Heart right ventricle (tissue), 16 donors: ENCODE measurements at regions of chrX and their contacts with region 1.

Region 1: DNA sequence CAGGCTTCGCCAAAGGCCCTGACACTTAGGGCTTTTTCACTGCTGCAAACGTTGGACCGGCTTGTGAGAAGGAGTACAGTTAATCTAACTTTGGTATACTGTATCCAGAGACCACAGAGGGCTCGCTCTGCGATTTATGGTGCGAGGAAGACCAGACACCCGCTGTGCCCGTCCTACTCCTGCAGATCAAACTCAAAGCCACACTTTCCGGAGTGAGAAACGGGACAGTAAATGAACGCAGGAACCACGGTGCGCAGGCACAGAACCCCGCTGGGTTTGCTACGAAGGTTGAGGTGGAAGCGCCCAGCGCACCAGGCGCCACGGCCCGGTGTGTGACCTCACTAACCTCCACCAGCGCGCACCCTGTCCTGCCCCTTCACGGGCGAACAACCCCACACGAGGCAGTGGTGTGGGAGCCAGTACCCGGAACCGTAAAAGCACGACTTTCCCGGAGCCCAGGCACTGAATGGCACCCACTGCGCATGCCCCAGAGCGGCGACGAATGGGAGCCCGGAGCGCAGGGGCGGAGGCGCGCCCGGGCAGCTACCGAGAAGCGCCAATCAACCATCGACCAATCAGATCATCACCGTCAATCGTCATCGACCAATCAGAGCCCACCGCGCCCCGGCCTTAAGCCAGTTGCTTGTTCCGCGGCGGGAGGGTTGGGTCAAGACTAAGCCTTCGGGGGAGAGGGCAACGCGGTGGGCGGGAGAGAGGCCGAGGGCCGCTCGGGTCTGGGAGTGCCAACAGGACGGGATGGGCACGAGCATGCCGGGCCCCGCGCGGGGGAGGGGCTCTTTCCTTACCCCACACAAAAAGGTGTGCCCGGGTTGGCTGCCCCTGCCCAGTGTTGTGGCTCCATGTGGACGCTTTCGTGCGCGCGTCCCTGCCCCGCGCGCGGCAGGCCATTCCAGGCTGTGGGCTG is 21.3 kb upstream of the WDR45 start:
- DNase-seq: peak; percentile 90 to 91
- ATAC-seq: peak; percentile 96 to 99 (median 98)
- H3K4me3 ChIP-seq: peak overlapping the region; percentile 14 to 72 (median 61)
- H3K27ac ChIP-seq: peak overlapping the region in 9 of 10 donors; percentile 57 to 85 (median 76)
- H3K4me1 ChIP-seq: peaks cover 0 to 8% (median 0%) of the 10 kb centered on the region in 9 donors
- H3K27me3 ChIP-seq: no peaks in the 10 kb centered on the region
- CTCF ChIP-seq: no peak

Region 2: DNA sequence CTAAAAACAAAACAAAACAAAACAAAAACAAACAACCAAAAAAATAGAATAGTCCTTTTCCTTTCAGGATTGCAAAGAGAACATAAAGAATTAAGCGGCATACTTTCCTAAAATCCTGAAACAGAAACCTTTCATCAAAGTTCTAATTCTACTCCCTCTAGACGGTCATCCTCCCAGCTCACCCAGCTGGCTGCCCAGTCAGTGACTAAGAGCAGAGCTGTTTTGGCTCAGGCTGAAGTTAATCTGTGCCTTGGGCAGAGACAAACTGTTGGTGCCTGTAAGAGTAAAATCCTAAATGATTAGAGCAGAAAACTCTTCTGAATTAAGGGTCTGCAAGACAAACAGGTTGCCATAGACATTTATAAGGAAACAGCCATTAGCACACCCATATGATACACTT is 435.0 kb before region 1 on chrX:
- intact Hi-C with region 1: no loop called
- DNase-seq: no peak
- ATAC-seq: no peak
- H3K4me3 ChIP-seq: no peak overlapping the region
- H3K27ac ChIP-seq: no peak overlapping the region
- H3K4me1 ChIP-seq: no peaks in the 10 kb centered on the region
- H3K27me3 ChIP-seq: peaks cover 0 to 10% (median 0%) of the 10 kb centered on the region in 7 donors
- CTCF ChIP-seq: no peak

Region 3: GRCh38 chrX:48683411-48683982 is 417.5 kb before region 1 on chrX and contains the start of gene WAS:
- intact Hi-C with region 1: no loop called
- DNase-seq: no peak
- ATAC-seq: peak; percentile 28 to 82 (median 51)
- H3K4me3 ChIP-seq: peak within 1 kb of the TSS in 5 of 10 donors; percentile 11 to 54 (median 13)
- H3K27ac ChIP-seq: peak within 1 kb of the TSS in 6 of 10 donors; percentile 15 to 93 (median 41)
- H3K4me1 ChIP-seq: peaks cover 0 to 24% (median 0%) of the 10 kb centered on the region in 9 donors
- H3K27me3 ChIP-seq: peaks cover 0 to 7% (median 0%) of the 10 kb centered on the region in 7 donors
- CTCF ChIP-seq: no peak
- total RNA-seq, gene WAS: 0.86 to 14.3 (median 1.7) TPM

Region 4: GRCh38 chrX:48891402-48892288 is 209.3 kb before region 1 on chrX:
- intact Hi-C with region 1: no loop called
- DNase-seq: peak; percentile 79 to 83
- ATAC-seq: peak; percentile 94 to 97 (median 95)
- H3K4me3 ChIP-seq: peak overlapping the region; percentile 51 to 76 (median 63)
- H3K27ac ChIP-seq: peak overlapping the region in 9 of 10 donors; percentile 4 to 76 (median 55)
- H3K4me1 ChIP-seq: peaks cover 0 to 17% (median 5%) of the 10 kb centered on the region in 9 donors
- H3K27me3 ChIP-seq: no peaks in the 10 kb centered on the region
- CTCF ChIP-seq: peak; percentile 7 to 69 (median 50)

Region 5: DNA sequence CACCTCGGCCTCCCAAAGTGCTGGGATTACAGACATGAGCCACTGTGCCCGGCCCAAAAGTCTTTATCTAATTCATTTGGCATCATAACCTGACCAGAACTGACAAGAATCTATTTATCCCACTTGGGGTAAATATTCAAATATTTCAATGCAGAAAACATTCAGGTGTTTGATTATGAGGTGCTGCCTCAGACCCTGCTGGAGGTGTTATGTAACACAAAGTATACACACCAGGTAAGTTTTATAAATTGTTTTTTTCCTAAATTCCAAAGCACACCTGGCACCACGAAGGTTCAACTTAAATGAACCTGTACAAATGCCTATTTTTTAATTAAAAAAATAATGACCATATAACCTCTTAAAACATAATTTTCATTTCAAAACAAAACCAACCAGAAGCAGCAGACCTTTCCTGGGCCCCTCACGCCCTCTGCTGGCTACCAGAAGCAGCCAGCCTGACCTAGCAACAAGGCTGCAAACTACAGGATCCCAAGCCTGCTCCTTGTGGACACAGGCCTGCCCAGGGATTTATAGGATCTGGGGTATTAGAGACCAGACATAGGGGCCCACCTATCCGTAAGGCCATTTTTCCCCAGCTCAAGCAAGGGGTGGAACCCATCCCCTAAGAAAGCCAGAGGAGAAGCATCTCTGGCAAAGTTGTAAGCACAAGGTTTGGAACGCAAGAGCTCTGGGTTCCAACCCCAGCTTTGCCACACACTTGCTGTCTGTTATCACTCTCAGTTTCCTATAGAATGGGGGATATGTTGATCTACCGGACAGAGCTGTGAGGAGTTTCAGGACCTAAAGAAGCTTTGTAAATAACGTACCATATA is 155.2 kb before region 1 on chrX:
- intact Hi-C with region 1: no loop called
- DNase-seq: peak; percentile 29 to 37
- ATAC-seq: peak in 5 of 8 donors; percentile 37 to 69 (median 66)
- H3K4me3 ChIP-seq: no peak overlapping the region
- H3K27ac ChIP-seq: no peak overlapping the region
- H3K4me1 ChIP-seq: peaks cover 0 to 22% (median 11%) of the 10 kb centered on the region in 9 donors
- H3K27me3 ChIP-seq: no peaks in the 10 kb centered on the region
- CTCF ChIP-seq: peak; percentile 30 to 84 (median 66)

Region 6: DNA sequence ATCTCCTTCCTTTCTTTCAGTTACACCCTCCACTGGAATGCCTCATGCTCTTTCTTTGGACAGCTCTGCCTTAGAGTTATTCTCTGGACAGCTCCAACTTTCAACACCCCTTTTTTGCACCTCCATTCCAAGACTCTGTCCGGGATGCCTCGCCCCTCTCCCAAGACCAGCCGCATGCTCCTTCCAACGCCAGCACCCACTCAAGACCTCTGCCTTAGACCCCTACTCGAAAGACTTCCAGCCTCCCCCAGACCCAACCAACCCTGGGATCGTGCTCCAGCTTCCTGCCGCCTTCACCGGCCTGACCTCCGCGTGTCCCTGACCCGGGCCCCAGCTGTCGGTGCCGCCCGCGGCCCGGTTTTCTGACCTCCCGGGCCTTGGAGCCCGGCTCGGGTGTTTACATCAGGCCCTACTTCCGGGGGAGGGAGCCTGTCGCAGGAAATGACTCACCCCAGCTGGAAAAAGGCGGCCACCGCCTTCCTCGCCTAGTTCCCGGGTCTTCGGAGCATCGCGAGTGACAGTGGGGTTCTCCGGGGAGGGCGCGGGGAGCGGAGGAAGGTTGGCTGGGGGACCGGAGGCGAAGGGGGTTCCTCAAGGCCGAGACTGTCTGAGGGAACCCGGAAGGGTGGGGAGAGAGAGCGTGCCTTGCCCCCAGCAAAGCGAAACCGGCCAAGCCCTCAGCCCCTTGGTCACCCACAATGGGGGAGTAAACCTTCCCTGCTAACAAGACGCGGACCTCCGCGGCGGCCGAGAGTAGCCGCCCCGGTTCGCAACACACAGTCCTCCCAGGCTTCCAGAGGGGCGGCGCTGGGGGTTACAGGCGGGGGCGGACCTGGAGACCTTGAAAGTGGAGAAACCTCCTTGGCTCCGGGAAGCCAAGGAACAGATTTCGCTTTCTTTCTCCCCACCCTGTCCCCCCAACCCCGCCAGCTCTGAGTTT is 21.2 kb before region 1 on chrX and contains the start of gene WDR45:
- intact Hi-C with region 1: loop called in 1 of 10 experiments (anchors 2 kb)
- DNase-seq: peak; percentile 70 to 77
- ATAC-seq: peak; percentile 76 to 96 (median 93)
- H3K4me3 ChIP-seq: peak within 1 kb of the TSS; percentile 53 to 75 (median 68)
- H3K27ac ChIP-seq: peak within 1 kb of the TSS; percentile 89 to 98 (median 95)
- H3K4me1 ChIP-seq: peaks cover 0 to 13% (median 0%) of the 10 kb centered on the region in 9 donors
- H3K27me3 ChIP-seq: no peaks in the 10 kb centered on the region
- CTCF ChIP-seq: no peak
- total RNA-seq, gene WDR45: 45.7 to 84.7 (median 60.6) TPM